ENCODE measurements at regions of chr13 and their contacts with region 1.

Region 1: GRCh38 chr13:24365191-24365590 is 55.8 kb downstream of the C1QTNF9 start:
- DNase-seq: no peak
- H3K4me3 ChIP-seq: no peak overlapping the region
- H3K27ac ChIP-seq: no peak overlapping the region
- H3K4me1 ChIP-seq: no peaks in the 10 kb centered on the region
- H3K27me3 ChIP-seq: no peaks in the 10 kb centered on the region
- CTCF ChIP-seq: no peak
- POLR2A ChIP-seq: no peak

Region 2: GRCh38 chr13:22944378-22944777 is 1420.8 kb before region 1 on chr13:
- intact Hi-C with region 1: loop called (anchors 5 kb)
- DNase-seq: no peak
- H3K4me3 ChIP-seq: no peak overlapping the region
- H3K27ac ChIP-seq: no peak overlapping the region
- H3K4me1 ChIP-seq: no peaks in the 10 kb centered on the region
- H3K27me3 ChIP-seq: no peaks in the 10 kb centered on the region
- CTCF ChIP-seq: no peak
- POLR2A ChIP-seq: no peak

Region 3: GRCh38 chr13:23375001-23375971 is 989.9 kb before region 1 on chr13:
- intact Hi-C with region 1: no loop called
- DNase-seq: peak; percentile 93
- H3K4me3 ChIP-seq: peak overlapping the region; percentile 61 to 68
- H3K27ac ChIP-seq: peak overlapping the region; percentile 82
- H3K4me1 ChIP-seq: no peaks in the 10 kb centered on the region
- H3K27me3 ChIP-seq: no peaks in the 10 kb centered on the region
- CTCF ChIP-seq: peak in 2 of 4 experiments; percentile 17 to 25
- POLR2A ChIP-seq: peak; percentile 52